ENCODE measurements at regions of chr4 and their contacts with region 1.

Region 1: GRCh38 chr4:98658287-98659105 is at the start of gene TSPAN5:
- DNase-seq: peak; percentile 69 to 82
- ATAC-seq: peak; percentile 90 to 97 (median 94)
- H3K4me3 ChIP-seq: peak within 1 kb of the TSS; percentile 37 to 91 (median 72)
- H3K27ac ChIP-seq: peak within 1 kb of the TSS in 9 of 10 donors; percentile 44 to 84 (median 68)
- H3K4me1 ChIP-seq: peaks cover 5 to 54% (median 19%) of the 10 kb centered on the region in 9 donors
- H3K27me3 ChIP-seq: peaks cover 0 to 36% (median 0%) of the 10 kb centered on the region in 7 donors
- CTCF ChIP-seq: no peak
- total RNA-seq, gene TSPAN5: 0.85 to 6.7 (median 4.4) TPM

Region 2: GRCh38 chr4:98143001-98143899 is 515.2 kb before region 1 on chr4 and contains the start of gene STPG2:
- intact Hi-C with region 1: loop called in 1 of 10 experiments (anchors 10 kb)
- DNase-seq: peak; percentile 90 to 95
- ATAC-seq: peak; percentile 99 to 100 (median 100)
- H3K4me3 ChIP-seq: peak within 1 kb of the TSS; percentile 61 to 78 (median 73)
- H3K27ac ChIP-seq: peak within 1 kb of the TSS; percentile 33 to 94 (median 86)
- H3K4me1 ChIP-seq: peaks cover 0 to 14% (median 5%) of the 10 kb centered on the region in 9 donors
- H3K27me3 ChIP-seq: no peaks in the 10 kb centered on the region
- CTCF ChIP-seq: peak in 8 of 9 donors; percentile 20 to 61 (median 51)
- total RNA-seq, gene STPG2: 0.22 to 0.58 (median 0.42) TPM

Region 3: GRCh38 chr4:98474408-98474844 is 184.1 kb before region 1 on chr4:
- intact Hi-C with region 1: loop called in 3 of 10 experiments (anchors 10 kb)
- DNase-seq: no peak
- ATAC-seq: no peak
- H3K4me3 ChIP-seq: no peak overlapping the region
- H3K27ac ChIP-seq: no peak overlapping the region
- H3K4me1 ChIP-seq: peaks cover 0 to 5% (median 0%) of the 10 kb centered on the region in 9 donors
- H3K27me3 ChIP-seq: no peaks in the 10 kb centered on the region
- CTCF ChIP-seq: no peak

Region 4: DNA sequence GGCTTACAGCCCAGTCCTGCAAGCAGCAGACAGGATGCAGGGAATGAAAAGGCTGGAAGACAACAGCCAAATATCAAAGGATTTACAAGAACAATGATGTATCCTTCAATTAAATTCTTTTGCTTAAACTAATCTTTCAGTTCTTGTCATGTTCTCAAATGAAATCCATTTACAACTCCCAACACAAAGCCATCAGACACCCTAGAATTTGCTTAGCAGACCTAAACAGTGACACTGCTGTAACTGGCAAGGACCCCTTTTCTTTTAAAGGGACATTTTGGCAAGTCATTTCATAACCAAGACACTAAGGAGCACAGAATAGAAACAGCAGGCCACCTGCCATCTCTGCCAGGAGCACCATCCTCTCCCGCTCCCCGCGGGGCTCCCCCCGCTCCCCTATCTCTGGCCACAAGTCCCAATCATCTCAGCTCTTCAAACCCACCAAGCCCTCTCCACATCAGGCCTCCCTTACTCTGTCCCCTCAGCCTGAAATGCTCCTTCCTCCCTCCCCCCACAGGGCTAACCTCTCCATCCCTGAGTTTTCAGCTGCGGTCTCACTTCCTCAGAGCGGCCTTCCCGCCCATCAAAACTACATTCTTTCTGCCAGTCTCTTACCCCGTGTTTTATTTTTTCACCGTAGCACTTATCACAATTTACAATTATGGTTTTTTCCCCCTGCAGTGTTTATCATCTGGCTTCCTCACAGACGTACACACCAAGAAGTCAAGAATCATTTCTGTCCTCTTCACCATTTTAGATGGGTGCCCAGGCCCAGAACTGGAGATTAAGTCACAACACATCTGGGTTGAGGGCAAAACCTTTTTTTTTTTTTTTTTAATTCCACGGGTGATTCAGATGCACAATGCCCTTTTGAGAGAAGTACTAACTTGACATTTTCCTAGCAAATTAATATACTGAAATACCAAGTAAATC is 45.9 kb before region 1 on chr4:
- intact Hi-C with region 1: no loop called
- DNase-seq: no peak
- ATAC-seq: no peak
- H3K4me3 ChIP-seq: no peak overlapping the region
- H3K27ac ChIP-seq: no peak overlapping the region
- H3K4me1 ChIP-seq: peaks cover 0 to 27% (median 5%) of the 10 kb centered on the region in 9 donors
- H3K27me3 ChIP-seq: no peaks in the 10 kb centered on the region
- CTCF ChIP-seq: no peak

Region 5: GRCh38 chr4:98919996-98920395 is 261.5 kb after region 1 on chr4:
- intact Hi-C with region 1: loop called in 2 of 10 experiments (anchors 5 to 10 kb)
- DNase-seq: no peak
- ATAC-seq: no peak
- H3K4me3 ChIP-seq: no peak overlapping the region
- H3K27ac ChIP-seq: no peak overlapping the region
- H3K4me1 ChIP-seq: peaks cover 0 to 41% (median 8%) of the 10 kb centered on the region in 9 donors
- H3K27me3 ChIP-seq: no peaks in the 10 kb centered on the region
- CTCF ChIP-seq: no peak

Measured in heart right ventricle (tissue), 16 donors.